ENCODE measurements at regions of chr5 and their contacts with region 1.

Region 1: DNA sequence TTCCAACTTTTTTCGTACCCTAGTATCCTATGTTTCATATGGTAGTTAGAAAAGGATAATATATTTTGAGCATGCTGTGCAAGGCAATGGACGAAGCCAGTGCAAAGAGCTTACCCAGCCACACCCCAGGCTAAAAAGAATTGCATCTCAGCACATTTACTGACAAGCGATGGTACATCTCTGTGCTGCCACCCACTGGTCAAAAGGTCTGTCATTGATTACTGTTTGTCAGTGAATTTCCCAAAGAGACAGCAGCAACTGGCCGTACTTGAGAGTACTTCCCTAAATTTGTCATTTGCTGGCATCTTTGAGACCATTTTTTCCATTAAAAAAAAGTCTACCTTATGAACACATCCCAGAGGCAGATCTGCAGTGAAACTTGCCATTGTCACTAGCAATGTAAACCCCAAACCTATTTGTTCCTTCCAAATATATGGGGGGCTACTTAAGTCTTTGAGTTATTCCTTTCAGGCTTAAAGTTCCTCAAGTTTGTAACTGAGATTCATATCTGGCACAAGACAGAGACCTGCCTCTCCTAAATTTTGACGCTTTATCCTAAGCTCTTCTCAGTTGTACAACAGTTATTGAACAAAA is 184.3 kb downstream of the CTNND2 start:
- DNase-seq: peak; percentile 73
- H3K4me3 Mint-ChIP-seq: no peak overlapping the region
- H3K27ac Mint-ChIP-seq: no peak overlapping the region
- H3K4me1 Mint-ChIP-seq: peaks cover 3% of the 10 kb centered on the region
- H3K27me3 Mint-ChIP-seq: no peaks in the 10 kb centered on the region
- CTCF ChIP-seq: peak; percentile 53

Region 2: GRCh38 chr5:12023614-12024241 is 303.7 kb after region 1 on chr5:
- CTCF ChIA-PET with region 1: interaction called, 5 read pairs
- intact Hi-C with region 1: loop called (anchors 2 kb)
- DNase-seq: peak; percentile 46
- H3K4me3 Mint-ChIP-seq: no peak overlapping the region
- H3K27ac Mint-ChIP-seq: no peak overlapping the region
- H3K4me1 Mint-ChIP-seq: no peaks in the 10 kb centered on the region
- H3K27me3 Mint-ChIP-seq: no peaks in the 10 kb centered on the region
- CTCF ChIP-seq: peak; percentile 51

Region 3: GRCh38 chr5:12093586-12093985 is 373.6 kb after region 1 on chr5:
- CTCF ChIA-PET with region 1: no interaction called
- intact Hi-C with region 1: no loop called
- DNase-seq: no peak
- H3K4me3 Mint-ChIP-seq: no peak overlapping the region
- H3K27ac Mint-ChIP-seq: no peak overlapping the region
- H3K4me1 Mint-ChIP-seq: no peaks in the 10 kb centered on the region
- H3K27me3 Mint-ChIP-seq: no peaks in the 10 kb centered on the region
- CTCF ChIP-seq: no peak

Measured in Calu3 (cell line).